ENCODE measurements at regions of chr16 and their contacts with region 1.

Region 1: GRCh38 chr16:57757326-57757786 is 21.8 kb downstream of the KATNB1 start:
- DNase-seq: peak; percentile 90
- H3K4me3 ChIP-seq: no peak overlapping the region
- H3K27ac ChIP-seq: peak overlapping the region; percentile 78
- H3K4me1 ChIP-seq: peaks cover 28% of the 10 kb centered on the region
- H3K27me3 ChIP-seq: no peaks in the 10 kb centered on the region
- CTCF ChIP-seq: peak; percentile 96

Region 2: DNA sequence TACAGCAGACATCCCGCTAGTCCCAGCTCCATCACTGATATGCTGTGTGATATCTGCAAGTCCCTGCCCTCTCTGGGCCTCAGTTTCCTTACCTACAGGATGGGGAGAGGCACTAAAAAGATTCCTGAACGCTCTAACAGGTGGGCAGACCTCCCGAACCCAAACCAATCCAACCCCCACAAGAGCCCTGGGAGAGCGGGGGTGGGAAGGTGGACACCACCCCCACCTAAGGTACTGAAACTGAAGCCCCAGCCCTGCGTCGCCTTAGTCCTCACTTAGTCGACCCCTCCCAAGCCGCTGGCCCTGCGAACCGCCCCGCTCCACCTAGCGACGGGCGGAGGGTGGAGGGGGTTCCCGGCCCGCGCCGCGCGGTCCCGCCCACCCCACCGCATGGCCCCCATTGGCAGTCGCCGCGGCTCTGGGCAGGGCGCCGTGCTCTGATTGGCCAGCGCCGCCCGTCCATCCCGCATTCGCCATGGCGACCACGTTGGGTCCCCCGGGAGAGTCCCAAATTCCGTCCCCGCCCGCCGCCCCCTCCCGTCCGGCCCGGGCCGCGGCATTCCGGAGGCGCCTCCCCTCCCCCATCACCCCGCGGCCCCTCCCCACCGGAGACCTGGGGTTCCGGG is 221.6 kb before region 1 on chr16:
- CTCF ChIA-PET with region 1: no interaction called
- POLR2A ChIA-PET with region 1: no interaction called
- intact Hi-C with region 1: no loop called
- DNase-seq: peak; percentile 93
- H3K4me3 ChIP-seq: peak overlapping the region; percentile 91
- H3K27ac ChIP-seq: peak overlapping the region; percentile 92
- H3K4me1 ChIP-seq: peaks cover 25% of the 10 kb centered on the region
- H3K27me3 ChIP-seq: no peaks in the 10 kb centered on the region
- CTCF ChIP-seq: peak; percentile 24; the same call in 1 of the 2 replicates

Region 3: GRCh38 chr16:57591086-57591869 is 166.1 kb before region 1 on chr16:
- CTCF ChIA-PET with region 1: no interaction called
- POLR2A ChIA-PET with region 1: no interaction called
- intact Hi-C with region 1: loop called (anchors 10 kb)
- DNase-seq: peak; percentile 84
- H3K4me3 ChIP-seq: no peak overlapping the region
- H3K27ac ChIP-seq: no peak overlapping the region
- H3K4me1 ChIP-seq: peaks cover 10% of the 10 kb centered on the region
- H3K27me3 ChIP-seq: no peaks in the 10 kb centered on the region
- CTCF ChIP-seq: peak; percentile 95

Region 4: GRCh38 chr16:57606847-57607501 is 150.4 kb before region 1 on chr16:
- CTCF ChIA-PET with region 1: no interaction called
- POLR2A ChIA-PET with region 1: no interaction called
- intact Hi-C with region 1: no loop called
- DNase-seq: no peak
- H3K4me3 ChIP-seq: no peak overlapping the region
- H3K27ac ChIP-seq: no peak overlapping the region
- H3K4me1 ChIP-seq: peaks cover 3% of the 10 kb centered on the region
- H3K27me3 ChIP-seq: no peaks in the 10 kb centered on the region
- CTCF ChIP-seq: no peak

Region 5: DNA sequence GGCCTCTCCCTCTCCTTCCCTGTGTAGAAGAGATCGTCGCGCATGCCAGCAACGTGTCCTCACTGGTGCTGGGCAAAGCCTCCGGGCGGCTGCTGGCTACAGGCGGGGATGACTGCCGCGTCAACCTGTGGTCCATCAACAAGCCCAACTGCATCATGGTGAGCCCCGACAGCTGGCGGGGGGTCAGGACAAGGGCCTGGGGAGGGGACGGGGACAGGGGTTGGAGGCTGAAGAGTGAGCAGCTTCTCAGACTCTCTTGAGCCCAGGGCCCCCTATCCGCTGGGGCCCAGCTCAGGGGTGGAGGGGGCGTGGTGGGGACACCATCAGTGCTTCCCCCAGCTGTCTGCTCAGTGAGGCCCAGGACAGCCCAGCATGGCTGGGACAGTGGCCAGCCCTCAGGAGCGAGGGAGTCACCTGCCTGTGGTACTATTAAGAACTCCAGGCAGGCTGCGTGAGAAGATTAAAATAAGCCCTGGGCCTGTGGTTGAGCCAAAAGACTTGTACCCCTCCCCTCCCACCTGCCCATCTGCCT is 15.6 kb before region 1 on chr16:
- CTCF ChIA-PET with region 1: interaction called, 4 read pairs
- POLR2A ChIA-PET with region 1: interaction called, 15 read pairs
- intact Hi-C with region 1: no loop called
- DNase-seq: peak; percentile 42
- H3K4me3 ChIP-seq: no peak overlapping the region
- H3K27ac ChIP-seq: peak overlapping the region; percentile 53
- H3K4me1 ChIP-seq: peaks cover 44% of the 10 kb centered on the region
- H3K27me3 ChIP-seq: no peaks in the 10 kb centered on the region
- CTCF ChIP-seq: no peak

Region 6: GRCh38 chr16:57846078-57846697 is 88.8 kb after region 1 on chr16:
- CTCF ChIA-PET with region 1: no interaction called
- POLR2A ChIA-PET with region 1: no interaction called
- intact Hi-C with region 1: loop called (anchors 5 kb)
- DNase-seq: peak; percentile 89
- H3K4me3 ChIP-seq: peak overlapping the region; percentile 39
- H3K27ac ChIP-seq: peak overlapping the region; percentile 100
- H3K4me1 ChIP-seq: peaks cover 79% of the 10 kb centered on the region
- H3K27me3 ChIP-seq: no peaks in the 10 kb centered on the region
- CTCF ChIP-seq: no peak